Adrenal gland (tissue), 19 donors: ENCODE measurements at regions of chr17 and their contacts with region 1.

Region 1: GRCh38 chr17:51224402-51225262 is 35.2 kb downstream of the MBTD1 start:
- DNase-seq: no peak
- H3K4me3 ChIP-seq: peak overlapping the region in 1 of 4 donors; percentile 0
- H3K27ac ChIP-seq: peak overlapping the region in 1 of 5 donors; percentile 23
- H3K4me1 ChIP-seq: peaks cover 0 to 17% of the 10 kb centered on the region in 2 donors
- H3K27me3 ChIP-seq: no peaks in the 10 kb centered on the region
- CTCF ChIP-seq: no peak
- POLR2A ChIP-seq: no peak

Region 2: GRCh38 chr17:50798424-50799288 is 426.0 kb before region 1 on chr17:
- intact Hi-C with region 1: no loop called
- DNase-seq: no peak
- H3K4me3 ChIP-seq: no peak overlapping the region
- H3K27ac ChIP-seq: no peak overlapping the region
- H3K4me1 ChIP-seq: no peaks in the 10 kb centered on the region
- H3K27me3 ChIP-seq: no peaks in the 10 kb centered on the region
- CTCF ChIP-seq: no peak
- POLR2A ChIP-seq: no peak

Region 3: DNA sequence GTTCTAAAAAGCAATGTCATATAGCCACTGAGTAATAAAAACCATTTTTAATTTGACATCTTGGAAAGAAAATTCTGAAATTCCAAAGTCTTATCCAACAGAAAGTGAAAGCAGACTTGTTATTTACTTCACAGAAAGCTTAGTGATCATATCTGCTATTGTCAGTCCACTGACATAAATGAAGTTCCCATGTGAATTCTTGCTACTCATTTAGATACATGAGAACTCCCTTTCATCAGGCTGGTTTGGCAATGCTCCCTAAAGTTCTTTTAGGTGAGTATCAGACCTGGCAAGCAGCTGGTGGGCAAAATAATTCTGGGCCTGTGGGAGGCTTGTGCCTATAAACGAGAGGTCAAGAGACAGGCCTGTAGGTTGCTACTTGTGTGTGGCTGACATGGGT is 35.0 kb before region 1 on chr17:
- intact Hi-C with region 1: no loop called
- DNase-seq: no peak
- H3K4me3 ChIP-seq: no peak overlapping the region
- H3K27ac ChIP-seq: peak overlapping the region in 1 of 5 donors; percentile 7
- H3K4me1 ChIP-seq: no peaks in the 10 kb centered on the region
- H3K27me3 ChIP-seq: no peaks in the 10 kb centered on the region
- CTCF ChIP-seq: no peak
- POLR2A ChIP-seq: no peak

Region 4: DNA sequence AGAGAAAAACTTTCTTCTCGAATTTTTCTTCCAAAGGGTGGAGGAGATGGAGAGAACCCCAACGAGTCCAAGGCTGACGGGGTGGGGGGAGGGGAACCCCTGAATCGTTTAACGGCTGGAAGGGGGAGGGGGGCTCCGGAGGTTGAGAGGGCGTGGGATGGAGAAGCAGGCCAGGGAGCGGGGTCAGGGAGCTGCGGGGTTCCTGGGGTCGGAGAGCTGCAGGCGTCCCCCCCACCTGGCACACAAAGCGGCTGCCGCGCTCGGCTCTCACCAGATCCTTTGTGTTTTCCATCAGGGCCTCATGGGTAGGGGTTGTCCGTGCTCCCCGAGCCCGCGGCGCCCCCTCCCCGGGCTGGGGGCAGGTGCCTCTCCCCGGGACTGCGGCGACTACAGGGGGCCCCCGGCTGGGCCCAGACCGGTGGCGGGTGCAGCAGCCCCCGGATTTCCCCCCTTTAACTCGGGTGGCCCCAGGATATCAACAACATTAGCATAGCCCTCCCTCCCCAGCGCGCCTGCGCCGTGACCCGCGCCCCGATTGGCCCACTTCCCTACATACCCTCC is 35.0 kb after region 1 on chr17 and contains the start of gene MBTD1:
- intact Hi-C with region 1: loop called in 1 of 2 experiments (anchors 5 kb)
- DNase-seq: peak in 6 of 7 donors; percentile 62 to 98 (median 97)
- H3K4me3 ChIP-seq: peak within 1 kb of the TSS; percentile 71 to 90 (median 75)
- H3K27ac ChIP-seq: peak within 1 kb of the TSS; percentile 90 to 98 (median 98)
- H3K4me1 ChIP-seq: peaks cover 25 to 53% of the 10 kb centered on the region in 2 donors
- H3K27me3 ChIP-seq: no peaks in the 10 kb centered on the region
- CTCF ChIP-seq: no peak
- POLR2A ChIP-seq: no peak
- total RNA-seq, gene MBTD1: 5.5 to 20.0 (median 12.7) TPM

Region 5: GRCh38 chr17:51289696-51290111 is 65.1 kb after region 1 on chr17:
- intact Hi-C with region 1: no loop called
- DNase-seq: no peak
- H3K4me3 ChIP-seq: no peak overlapping the region
- H3K27ac ChIP-seq: no peak overlapping the region
- H3K4me1 ChIP-seq: no peaks in the 10 kb centered on the region
- H3K27me3 ChIP-seq: no peaks in the 10 kb centered on the region
- CTCF ChIP-seq: no peak
- POLR2A ChIP-seq: no peak